ENCODE measurements at regions of chr1 and their contacts with region 1.

Region 1: DNA sequence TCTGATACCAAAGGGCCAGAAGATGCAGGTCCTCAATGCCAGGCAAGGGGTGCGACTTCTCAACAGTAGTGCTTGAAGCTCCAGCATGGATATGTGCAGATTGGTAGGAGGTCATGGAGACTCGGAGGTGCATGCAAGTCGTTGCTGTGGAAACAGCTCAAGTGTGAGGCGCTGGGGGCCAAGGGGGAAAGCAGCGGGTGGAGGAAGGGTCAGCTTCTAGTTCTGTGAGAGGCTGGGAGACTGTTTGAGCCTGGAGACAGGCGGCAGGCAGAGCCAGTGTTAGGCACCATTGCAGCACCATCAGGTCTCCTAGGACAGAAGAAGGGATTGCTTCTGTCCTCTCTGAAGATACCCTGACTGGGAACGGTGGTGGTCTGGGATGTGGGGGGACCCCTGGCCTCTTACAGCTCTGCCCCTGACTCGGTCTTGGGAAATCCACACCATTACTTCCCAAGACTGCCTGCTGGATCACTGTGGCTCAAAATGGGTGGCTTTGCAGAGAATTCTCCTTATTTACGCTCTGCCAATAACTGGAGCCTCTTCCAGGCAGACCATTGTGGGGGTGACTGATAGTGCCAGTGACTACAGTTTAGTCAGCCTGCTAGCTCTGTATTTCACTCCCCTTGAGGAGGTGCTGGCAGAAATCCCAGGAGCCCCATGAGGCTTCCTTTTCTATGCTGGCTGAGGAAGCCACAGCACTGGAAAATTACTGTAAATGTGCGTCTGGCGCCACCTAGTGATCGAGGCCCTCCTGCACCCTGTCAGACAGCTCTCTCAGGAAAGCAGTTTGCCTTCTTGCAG is 46.3 kb upstream of the VANGL1 start:
- DNase-seq: peak; percentile 92
- H3K4me3 Mint-ChIP-seq: no peak overlapping the region
- H3K27ac Mint-ChIP-seq: no peak overlapping the region
- H3K4me1 Mint-ChIP-seq: no peaks in the 10 kb centered on the region
- H3K27me3 Mint-ChIP-seq: no peaks in the 10 kb centered on the region
- CTCF ChIP-seq: peak; percentile 96

Region 2: DNA sequence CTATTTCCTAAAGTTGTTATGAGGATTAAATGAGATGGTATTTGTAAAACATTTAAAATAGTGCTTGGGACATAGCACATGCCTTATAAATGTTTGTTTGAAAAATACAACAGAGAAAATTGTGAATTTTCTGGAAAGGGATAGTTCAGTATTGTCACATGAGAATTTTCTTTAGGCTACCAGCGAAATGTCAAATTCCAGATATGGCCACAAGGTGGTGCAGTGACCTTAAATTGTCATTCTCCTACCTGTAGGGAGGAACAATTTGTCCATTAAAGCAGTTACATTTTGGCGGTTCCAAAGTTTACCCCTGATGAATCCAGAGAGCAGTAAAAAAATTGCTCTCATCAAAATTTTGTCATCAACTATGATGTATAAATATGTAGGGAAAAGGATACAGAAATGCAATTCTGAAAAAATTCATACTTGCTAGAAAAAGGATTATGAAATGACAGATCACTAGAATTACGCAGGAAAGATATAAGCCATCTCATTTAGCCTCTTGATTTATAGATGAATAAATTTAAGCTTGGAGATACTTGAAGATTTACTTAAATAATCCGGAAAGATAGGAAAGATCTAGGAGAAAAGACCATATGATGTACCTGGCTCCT is 616.1 kb before region 1 on chr1:
- CTCF ChIA-PET with region 1: interaction called, 5 read pairs
- POLR2A ChIA-PET with region 1: no interaction called
- intact Hi-C with region 1: loop called (anchors 1 kb)
- DNase-seq: peak; percentile 71
- H3K4me3 Mint-ChIP-seq: no peak overlapping the region
- H3K27ac Mint-ChIP-seq: no peak overlapping the region
- H3K4me1 Mint-ChIP-seq: no peaks in the 10 kb centered on the region
- H3K27me3 Mint-ChIP-seq: peaks cover 64% of the 10 kb centered on the region
- CTCF ChIP-seq: peak; percentile 66

Region 3: DNA sequence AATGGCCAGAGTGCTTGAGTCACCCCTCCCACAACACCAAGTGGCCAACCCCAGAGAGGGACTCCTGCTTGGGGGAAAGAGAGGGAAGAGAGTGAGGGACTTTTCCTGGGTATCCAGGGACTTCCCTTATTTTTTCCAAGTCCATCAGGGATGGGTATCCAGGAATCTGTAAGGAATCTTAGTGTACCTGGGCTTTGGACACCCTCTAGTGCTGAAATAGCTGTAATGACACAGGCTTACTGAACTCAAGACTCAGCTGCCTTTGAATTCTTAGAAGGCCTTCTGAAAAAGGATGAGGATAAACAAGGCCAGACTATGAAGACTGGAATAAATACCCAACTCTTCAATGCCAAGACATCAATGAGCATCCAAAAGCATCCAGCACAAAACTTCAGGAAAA is 553.8 kb before region 1 on chr1:
- CTCF ChIA-PET with region 1: interaction called, 3 read pairs
- POLR2A ChIA-PET with region 1: no interaction called
- intact Hi-C with region 1: loop called (anchors 5 kb)
- DNase-seq: peak; percentile 51
- H3K4me3 Mint-ChIP-seq: no peak overlapping the region
- H3K27ac Mint-ChIP-seq: no peak overlapping the region
- H3K4me1 Mint-ChIP-seq: no peaks in the 10 kb centered on the region
- H3K27me3 Mint-ChIP-seq: peaks cover 28% of the 10 kb centered on the region
- CTCF ChIP-seq: peak; percentile 39

Region 4: DNA sequence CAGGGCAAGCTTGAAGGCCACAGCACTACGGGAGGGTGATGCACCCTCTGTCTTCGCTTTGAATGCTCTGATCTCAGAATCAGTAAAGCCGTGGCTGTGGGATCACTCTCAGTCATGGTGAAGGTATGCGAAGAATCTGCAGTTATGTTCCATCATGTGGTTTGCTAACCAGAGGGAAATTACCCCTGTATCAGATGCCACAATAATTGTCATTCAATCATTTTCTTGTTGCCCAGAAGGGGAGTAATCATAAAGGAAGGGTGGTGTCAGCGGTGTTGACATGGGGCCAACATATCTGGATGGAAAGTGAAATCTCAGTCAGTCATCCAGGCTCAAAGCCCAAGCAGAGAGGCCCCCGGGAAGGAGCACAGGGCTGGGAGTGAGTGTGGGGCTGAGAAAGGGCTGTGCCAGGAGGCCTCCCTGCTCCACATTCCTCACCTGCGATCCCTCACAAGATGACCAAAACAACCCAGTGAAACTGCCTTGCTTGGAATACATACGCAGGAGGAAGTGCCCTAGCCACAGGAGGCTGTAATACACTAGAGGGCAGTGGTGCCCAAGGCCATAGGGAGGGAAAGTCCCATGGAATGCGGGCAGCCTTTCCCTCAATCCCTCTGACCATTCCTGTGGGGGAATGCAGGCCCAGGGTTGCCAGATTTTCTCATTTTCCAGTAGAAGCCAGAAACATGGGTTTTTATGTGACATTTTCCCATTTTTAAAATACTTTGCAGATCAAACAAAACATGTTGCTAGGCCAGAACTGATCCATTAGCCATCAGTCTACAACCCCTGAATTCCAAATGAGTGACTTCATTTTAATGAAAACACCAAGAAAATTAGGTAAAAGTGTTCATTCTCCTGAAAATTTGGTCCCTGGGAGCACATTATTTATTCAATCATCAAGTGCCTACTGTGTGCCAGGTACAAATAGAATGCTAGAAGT is 49.4 kb before region 1 on chr1:
- CTCF ChIA-PET with region 1: interaction called, 8 read pairs
- POLR2A ChIA-PET with region 1: interaction called, 3 read pairs
- intact Hi-C with region 1: loop called (anchors 1 kb)
- DNase-seq: peak; percentile 84
- H3K4me3 Mint-ChIP-seq: peak overlapping the region; percentile 57
- H3K27ac Mint-ChIP-seq: peak overlapping the region; percentile 92
- H3K4me1 Mint-ChIP-seq: peaks cover 15% of the 10 kb centered on the region
- H3K27me3 Mint-ChIP-seq: no peaks in the 10 kb centered on the region
- CTCF ChIP-seq: peak; percentile 61